ENCODE measurements at regions of chr1 and their contacts with region 1.

Region 1: DNA sequence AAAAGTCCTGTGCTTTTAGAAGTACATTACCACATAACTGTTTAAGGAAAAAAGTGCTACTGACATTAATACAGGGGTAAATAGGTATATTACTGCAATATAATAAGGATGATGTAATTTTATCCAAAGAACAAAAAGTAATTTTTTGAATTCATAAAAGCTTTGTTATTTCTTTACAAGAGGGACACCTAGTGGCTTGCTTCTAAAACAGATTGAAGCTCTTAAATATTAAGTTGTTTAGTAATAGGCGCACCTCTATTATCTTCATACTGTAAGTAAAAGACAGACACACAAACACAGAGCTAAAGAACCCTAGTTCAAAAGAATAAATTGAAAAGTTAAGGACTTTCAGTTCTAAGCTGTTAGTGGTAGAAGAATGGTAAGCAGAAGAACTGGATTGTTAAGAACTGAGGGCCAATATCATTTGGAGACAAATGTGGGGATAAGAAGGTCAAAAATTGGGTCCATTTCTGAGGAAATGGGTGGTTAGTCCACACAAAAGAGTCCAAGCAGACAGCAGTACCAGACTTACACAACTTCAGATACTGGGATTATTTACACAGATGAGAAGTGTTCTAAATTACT is 15.4 kb downstream of the ZNHIT6 start:
- DNase-seq: no peak
- H3K4me3 ChIP-seq: no peak overlapping the region
- H3K27ac ChIP-seq: no peak overlapping the region
- H3K4me1 ChIP-seq: peaks cover 0 to 4% (median under 1%) of the 10 kb centered on the region in 4 donors
- H3K27me3 ChIP-seq: no peaks in the 10 kb centered on the region
- CTCF ChIP-seq: peak; percentile 42 to 57 (median 55)
- EP300 ChIP-seq: no peak
- POLR2A ChIP-seq: no peak

Region 2: GRCh38 chr1:85307987-85308832 is 384.6 kb before region 1 on chr1:
- intact Hi-C with region 1: loop called (anchors 2 kb)
- DNase-seq: peak; percentile 95
- H3K4me3 ChIP-seq: peak overlapping the region in 1 of 4 donors; percentile 2
- H3K27ac ChIP-seq: peak overlapping the region in 1 of 4 donors; percentile 33
- H3K4me1 ChIP-seq: peaks cover 5 to 11% (median 9%) of the 10 kb centered on the region in 4 donors
- H3K27me3 ChIP-seq: no peaks in the 10 kb centered on the region
- CTCF ChIP-seq: peak; percentile 94 to 97 (median 97)
- EP300 ChIP-seq: no peak
- POLR2A ChIP-seq: no peak

Region 3: GRCh38 chr1:85494904-85495266 is 197.9 kb before region 1 on chr1:
- intact Hi-C with region 1: loop called (anchors 10 kb)
- DNase-seq: no peak
- H3K4me3 ChIP-seq: no peak overlapping the region
- H3K27ac ChIP-seq: no peak overlapping the region
- H3K4me1 ChIP-seq: no peaks in the 10 kb centered on the region
- H3K27me3 ChIP-seq: no peaks in the 10 kb centered on the region
- CTCF ChIP-seq: peak; percentile 44 to 52 (median 49)
- EP300 ChIP-seq: no peak
- POLR2A ChIP-seq: no peak

Region 4: DNA sequence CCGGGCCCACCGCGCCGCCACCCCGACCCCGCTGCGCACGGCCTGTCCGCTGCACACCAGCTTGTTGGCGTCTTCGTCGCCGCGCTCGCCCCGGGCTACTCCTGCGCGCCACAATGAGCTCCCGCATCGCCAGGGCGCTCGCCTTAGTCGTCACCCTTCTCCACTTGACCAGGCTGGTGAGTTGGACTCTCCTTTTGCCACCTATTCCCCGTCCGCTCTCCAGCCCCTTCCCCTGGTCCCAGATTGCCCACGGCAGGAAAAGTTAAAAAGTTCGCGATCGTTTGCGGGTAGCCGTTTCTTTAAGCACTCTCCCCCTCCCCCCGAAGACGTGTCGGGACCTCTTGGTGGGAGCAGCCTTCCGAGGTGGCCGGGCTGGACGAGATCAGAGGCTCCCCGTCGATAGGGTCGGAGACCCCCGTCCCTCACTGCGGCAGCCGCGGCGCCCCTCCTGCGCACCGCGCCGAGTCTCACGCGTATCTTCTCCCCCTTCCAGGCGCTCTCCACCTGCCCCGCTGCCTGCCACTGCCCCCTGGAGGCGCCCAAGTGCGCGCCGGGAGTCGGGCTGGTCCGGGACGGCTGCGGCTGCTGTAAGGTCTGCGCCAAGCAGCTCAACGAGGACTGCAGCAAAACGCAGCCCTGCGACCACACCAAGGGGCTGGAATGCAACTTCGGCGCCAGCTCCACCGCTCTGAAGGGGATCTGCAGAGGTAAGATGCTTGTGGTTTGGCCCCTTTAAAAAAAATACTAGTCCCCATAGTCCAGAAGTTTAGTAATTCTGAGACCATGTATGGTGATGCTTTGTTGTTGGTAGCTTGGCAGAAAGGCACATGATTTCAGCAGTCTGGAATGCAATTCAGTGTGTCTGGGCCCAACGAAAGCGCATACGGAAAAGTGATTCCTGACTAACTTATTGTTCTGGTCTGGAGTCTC is 111.7 kb before region 1 on chr1:
- intact Hi-C with region 1: loop called (anchors 5 kb)
- DNase-seq: peak; percentile 93
- H3K4me3 ChIP-seq: peak overlapping the region; percentile 80 to 91 (median 88)
- H3K27ac ChIP-seq: peak overlapping the region; percentile 99 to 100 (median 99)
- H3K4me1 ChIP-seq: peaks cover 32 to 66% (median 52%) of the 10 kb centered on the region in 4 donors
- H3K27me3 ChIP-seq: peaks cover 0 to 4% (median 0%) of the 10 kb centered on the region in 4 donors
- CTCF ChIP-seq: peak; percentile 71 to 89 (median 86)
- EP300 ChIP-seq: no peak
- POLR2A ChIP-seq: no peak

Region 5: DNA sequence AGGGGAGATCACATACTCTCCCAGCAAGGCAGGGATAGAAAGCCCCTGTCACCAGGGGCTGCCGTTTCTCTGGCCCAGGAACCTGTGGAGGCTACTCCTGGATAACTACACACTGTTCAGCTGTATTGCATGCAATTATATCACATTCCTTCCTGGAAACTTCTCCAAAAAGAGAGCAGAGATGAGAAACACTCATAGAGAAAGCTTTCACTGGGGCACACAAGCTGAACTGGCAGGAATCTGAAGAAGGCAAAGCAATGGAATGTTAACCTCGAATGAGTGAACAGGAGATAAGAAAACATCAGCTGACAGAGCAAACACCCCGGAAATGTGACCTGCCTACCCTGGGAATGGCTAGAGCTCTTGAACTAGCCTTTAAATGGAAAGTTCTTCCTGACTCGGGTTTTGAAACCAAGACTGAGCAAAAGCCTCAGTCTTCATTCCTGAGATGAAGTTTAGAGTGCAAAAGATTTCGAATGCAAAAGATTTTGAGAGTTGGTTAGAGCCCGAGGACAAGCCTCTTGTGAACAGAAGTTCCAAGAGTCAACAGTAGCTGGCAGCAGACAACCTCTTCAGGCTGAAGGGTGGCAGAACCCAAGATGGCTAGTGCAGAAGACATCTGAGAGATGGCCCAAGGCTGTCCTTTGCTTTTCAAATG is 80.0 kb before region 1 on chr1:
- intact Hi-C with region 1: loop called (anchors 5 kb)
- DNase-seq: no peak
- H3K4me3 ChIP-seq: no peak overlapping the region
- H3K27ac ChIP-seq: peak overlapping the region in 2 of 4 donors; percentile 6 to 59
- H3K4me1 ChIP-seq: peaks cover 9 to 13% (median 11%) of the 10 kb centered on the region in 4 donors
- H3K27me3 ChIP-seq: peaks cover 0 to 9% (median 0%) of the 10 kb centered on the region in 4 donors
- CTCF ChIP-seq: peak in 2 of 3 experiments; percentile 5 to 36
- EP300 ChIP-seq: no peak
- POLR2A ChIP-seq: no peak

Region 6: DNA sequence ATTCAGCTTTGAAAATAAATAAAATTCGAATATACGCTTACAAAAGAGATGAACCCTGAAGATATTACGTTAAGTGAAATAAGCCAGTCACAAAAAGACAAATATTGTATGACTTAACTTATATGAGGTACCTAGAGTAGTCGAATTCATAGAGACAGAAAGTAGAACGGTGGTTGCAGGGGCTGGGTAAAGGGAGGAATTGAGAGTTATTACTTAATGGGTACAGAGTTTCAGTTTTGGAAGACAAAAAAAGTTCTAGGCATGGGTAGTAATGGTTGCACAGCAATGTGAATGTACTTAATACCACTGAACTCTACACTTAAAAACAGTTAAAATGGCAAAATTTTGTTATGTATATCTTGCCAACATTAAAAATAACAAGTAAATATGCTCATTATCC is 64.0 kb after region 1 on chr1:
- intact Hi-C with region 1: no loop called
- DNase-seq: no peak
- H3K4me3 ChIP-seq: no peak overlapping the region
- H3K27ac ChIP-seq: no peak overlapping the region
- H3K4me1 ChIP-seq: no peaks in the 10 kb centered on the region
- H3K27me3 ChIP-seq: no peaks in the 10 kb centered on the region
- CTCF ChIP-seq: no peak
- EP300 ChIP-seq: no peak
- POLR2A ChIP-seq: no peak

Measured in esophagus muscularis mucosa (tissue), 4 donors.